Activated CD4-positive, alpha-beta T cell treated with anti-CD3 and anti-CD28 coated beads for 36 hours (primary cell): ENCODE measurements at regions of chr1 and their contacts with region 1.

Region 1: GRCh38 chr1:65687428-65688214 is 105.1 kb upstream of the PDE4B start:
- DNase-seq: peak; percentile 88
- ATAC-seq: peak; percentile 88
- H3K4me3 Mint-ChIP-seq: no peak overlapping the region
- H3K27ac Mint-ChIP-seq: no peak overlapping the region
- H3K4me1 Mint-ChIP-seq: peaks cover 2% of the 10 kb centered on the region
- H3K27me3 Mint-ChIP-seq: peaks cover 10% of the 10 kb centered on the region

Region 2: GRCh38 chr1:64268653-64269557 is 1418.7 kb before region 1 on chr1:
- CTCF ChIA-PET with region 1: no interaction called
- POLR2A ChIA-PET with region 1: no interaction called
- intact Hi-C with region 1: loop called in 1 of 2 experiments (anchors 2 kb)
- DNase-seq: peak; percentile 83
- ATAC-seq: peak; percentile 70
- H3K4me3 Mint-ChIP-seq: no peak overlapping the region
- H3K27ac Mint-ChIP-seq: no peak overlapping the region
- H3K4me1 Mint-ChIP-seq: no peaks in the 10 kb centered on the region
- H3K27me3 Mint-ChIP-seq: peaks cover 7% of the 10 kb centered on the region

Region 3: GRCh38 chr1:64823691-64824476 is 863.7 kb before region 1 on chr1:
- CTCF ChIA-PET with region 1: no interaction called
- POLR2A ChIA-PET with region 1: no interaction called
- intact Hi-C with region 1: loop called in 1 of 2 experiments (anchors 5 kb)
- DNase-seq: peak; percentile 74
- ATAC-seq: no peak
- H3K4me3 Mint-ChIP-seq: no peak overlapping the region
- H3K27ac Mint-ChIP-seq: peak overlapping the region; percentile 27
- H3K4me1 Mint-ChIP-seq: peaks cover 31% of the 10 kb centered on the region
- H3K27me3 Mint-ChIP-seq: no peaks in the 10 kb centered on the region

Region 4: DNA sequence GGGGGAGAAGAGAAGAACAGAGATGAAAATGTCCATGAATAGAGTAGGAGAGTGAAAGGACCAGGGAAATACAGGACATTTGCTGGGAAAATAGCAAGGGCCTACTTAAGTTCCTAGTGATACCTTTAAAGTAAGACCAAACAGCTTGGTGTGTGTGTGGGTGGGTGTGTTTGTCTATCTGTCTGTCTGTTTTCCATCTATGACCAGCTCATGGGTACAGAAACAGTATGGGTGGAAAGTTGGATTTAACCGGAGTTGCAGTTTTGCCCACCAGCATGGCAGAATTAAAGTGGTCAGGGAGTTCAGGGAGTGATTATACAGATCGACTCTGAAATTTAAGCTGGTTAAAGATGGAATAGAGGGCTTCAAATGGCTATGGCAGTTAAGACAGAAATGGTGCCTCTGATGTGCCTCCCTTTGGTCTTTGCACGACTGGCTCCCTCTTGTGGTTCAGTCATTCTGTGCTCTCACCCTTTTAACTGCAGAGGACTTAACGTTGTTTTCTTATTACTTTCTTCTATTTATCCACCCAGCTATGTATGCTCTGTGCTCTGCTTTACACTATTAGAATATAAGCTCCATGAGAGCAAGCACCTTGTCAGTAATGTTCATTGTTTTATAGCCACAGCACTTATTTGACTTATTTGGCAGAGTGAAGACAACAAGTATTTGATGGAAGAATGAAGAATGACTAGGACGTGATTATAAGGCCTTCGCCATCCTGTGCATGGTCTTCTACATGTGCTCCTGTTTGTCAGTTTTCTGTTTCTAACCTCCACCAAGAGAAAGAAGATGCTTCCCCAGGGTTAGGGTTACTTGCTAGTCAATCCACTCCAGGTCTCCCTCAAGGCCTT is 612.3 kb before region 1 on chr1:
- CTCF ChIA-PET with region 1: interaction called, 16 read pairs
- POLR2A ChIA-PET with region 1: no interaction called
- intact Hi-C with region 1: no loop called
- DNase-seq: peak; percentile 77
- ATAC-seq: peak; percentile 92
- H3K4me3 Mint-ChIP-seq: no peak overlapping the region
- H3K27ac Mint-ChIP-seq: no peak overlapping the region
- H3K4me1 Mint-ChIP-seq: peaks cover 20% of the 10 kb centered on the region
- H3K27me3 Mint-ChIP-seq: peaks cover 3% of the 10 kb centered on the region

Region 5: DNA sequence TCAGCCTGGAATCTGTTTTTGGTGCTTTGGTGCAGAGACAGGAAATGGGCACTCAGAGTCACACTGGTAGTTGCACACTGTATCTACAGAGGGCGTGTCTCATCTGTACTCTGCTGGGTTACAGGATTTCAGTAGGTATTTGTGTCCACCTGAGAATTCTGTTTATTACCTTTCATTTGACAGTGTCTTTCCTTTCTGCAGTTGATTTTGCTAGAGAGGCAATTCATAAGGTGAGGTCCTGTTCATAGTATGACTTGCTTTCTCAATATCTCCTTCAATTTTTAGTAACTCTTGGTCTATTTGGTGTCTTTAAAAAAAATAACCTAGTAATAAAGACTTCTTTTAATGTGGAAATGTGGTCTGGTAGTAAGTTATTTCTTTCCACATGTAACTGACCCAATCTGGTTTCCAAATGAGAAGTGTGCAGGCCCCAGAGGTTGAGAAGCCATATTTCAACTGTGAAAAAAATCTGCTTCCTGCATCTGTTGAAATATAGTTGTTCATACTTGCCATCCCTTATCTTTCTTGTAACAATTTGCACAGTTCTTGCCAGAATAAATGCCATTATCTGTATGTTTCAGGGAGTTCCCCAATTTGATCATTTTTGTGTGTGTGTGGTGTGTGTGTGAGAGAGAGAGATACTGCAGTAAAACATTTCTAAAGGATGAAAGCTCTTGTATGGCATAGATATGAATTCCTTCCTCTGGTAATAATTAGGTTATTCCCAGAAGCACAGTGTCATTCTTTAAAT is 456.7 kb before region 1 on chr1:
- CTCF ChIA-PET with region 1: interaction called, 41 read pairs
- POLR2A ChIA-PET with region 1: no interaction called
- intact Hi-C with region 1: loop called (anchors 1 kb)
- DNase-seq: no peak
- ATAC-seq: peak; percentile 84
- H3K4me3 Mint-ChIP-seq: no peak overlapping the region
- H3K27ac Mint-ChIP-seq: no peak overlapping the region
- H3K4me1 Mint-ChIP-seq: peaks cover 23% of the 10 kb centered on the region
- H3K27me3 Mint-ChIP-seq: peaks cover 5% of the 10 kb centered on the region

Region 6: GRCh38 chr1:65431111-65431705 is 256.4 kb before region 1 on chr1:
- CTCF ChIA-PET with region 1: interaction called, 5 read pairs
- POLR2A ChIA-PET with region 1: no interaction called
- intact Hi-C with region 1: loop called (anchors 1 to 5 kb)
- DNase-seq: no peak
- ATAC-seq: no peak
- H3K4me3 Mint-ChIP-seq: no peak overlapping the region
- H3K27ac Mint-ChIP-seq: no peak overlapping the region
- H3K4me1 Mint-ChIP-seq: peaks cover 10% of the 10 kb centered on the region
- H3K27me3 Mint-ChIP-seq: no peaks in the 10 kb centered on the region

Region 7: DNA sequence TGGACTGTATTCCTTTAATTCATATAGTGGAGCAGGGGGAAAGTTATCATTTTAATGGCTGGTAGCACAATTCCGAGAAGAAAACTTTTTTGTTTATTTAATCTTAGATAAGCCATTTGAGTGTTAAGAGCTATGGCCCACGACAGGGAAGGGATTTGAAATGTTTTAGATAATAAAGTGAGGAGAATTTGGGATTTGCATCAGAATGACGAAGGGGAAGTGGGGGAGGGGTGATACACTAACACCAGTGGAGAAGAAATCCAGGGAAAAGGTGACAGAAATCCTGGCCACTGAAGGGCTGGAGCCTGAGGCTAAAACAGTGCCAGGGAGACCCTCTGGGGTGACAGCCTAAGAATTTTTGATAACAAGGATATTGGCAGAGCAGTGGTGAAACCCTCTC is 246.2 kb before region 1 on chr1:
- CTCF ChIA-PET with region 1: no interaction called
- POLR2A ChIA-PET with region 1: no interaction called
- intact Hi-C with region 1: no loop called
- DNase-seq: no peak
- ATAC-seq: no peak
- H3K4me3 Mint-ChIP-seq: no peak overlapping the region
- H3K27ac Mint-ChIP-seq: no peak overlapping the region
- H3K4me1 Mint-ChIP-seq: no peaks in the 10 kb centered on the region
- H3K27me3 Mint-ChIP-seq: no peaks in the 10 kb centered on the region

Region 8: DNA sequence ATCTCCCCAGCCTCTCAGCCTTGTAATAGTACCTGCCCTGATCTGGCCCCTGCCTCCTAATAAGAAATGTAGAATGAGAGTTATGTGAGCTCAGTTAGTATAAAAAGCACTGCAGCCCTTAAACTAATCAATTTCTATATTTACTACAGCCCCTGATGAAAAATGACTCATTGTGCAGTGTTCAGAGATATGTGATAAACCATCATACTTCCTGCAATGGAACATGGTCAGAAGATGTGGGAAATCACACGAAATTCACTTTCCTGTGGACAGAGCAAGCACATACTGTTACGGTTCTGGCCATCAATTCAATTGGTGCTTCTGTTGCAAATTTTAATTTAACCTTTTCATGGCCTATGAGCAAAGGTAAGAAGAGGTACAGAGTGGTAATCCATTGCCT is 71.8 kb before region 1 on chr1:
- CTCF ChIA-PET with region 1: no interaction called
- POLR2A ChIA-PET with region 1: no interaction called
- intact Hi-C with region 1: no loop called
- DNase-seq: no peak
- ATAC-seq: no peak
- H3K4me3 Mint-ChIP-seq: no peak overlapping the region
- H3K27ac Mint-ChIP-seq: no peak overlapping the region
- H3K4me1 Mint-ChIP-seq: peaks cover 7% of the 10 kb centered on the region
- H3K27me3 Mint-ChIP-seq: no peaks in the 10 kb centered on the region

Region 9: GRCh38 chr1:65650682-65651081 is 36.9 kb before region 1 on chr1:
- CTCF ChIA-PET with region 1: no interaction called
- POLR2A ChIA-PET with region 1: no interaction called
- intact Hi-C with region 1: no loop called
- DNase-seq: no peak
- ATAC-seq: no peak
- H3K4me3 Mint-ChIP-seq: no peak overlapping the region
- H3K27ac Mint-ChIP-seq: no peak overlapping the region
- H3K4me1 Mint-ChIP-seq: no peaks in the 10 kb centered on the region
- H3K27me3 Mint-ChIP-seq: peaks cover 8% of the 10 kb centered on the region

Region 10: DNA sequence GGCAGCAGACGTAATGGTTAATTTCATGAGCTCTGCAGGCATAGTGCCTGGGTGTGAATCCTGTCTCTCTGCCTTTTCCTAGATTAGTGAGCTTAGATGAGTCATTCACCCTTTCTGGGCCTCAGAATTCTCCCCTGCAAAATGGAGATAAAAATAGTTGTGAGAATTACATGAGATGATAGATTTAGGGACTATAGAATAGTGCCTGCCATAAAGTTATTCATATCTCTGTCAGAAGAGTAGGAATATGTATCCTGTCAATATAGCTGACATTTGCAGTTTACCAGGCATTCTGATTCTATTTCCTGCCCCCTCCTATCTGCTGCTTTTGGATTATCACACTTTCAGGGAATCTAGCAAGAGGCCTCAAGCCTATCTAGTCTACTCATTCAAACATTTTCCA is 217.1 kb after region 1 on chr1:
- CTCF ChIA-PET with region 1: no interaction called
- POLR2A ChIA-PET with region 1: no interaction called
- intact Hi-C with region 1: no loop called
- DNase-seq: no peak
- ATAC-seq: no peak
- H3K4me3 Mint-ChIP-seq: no peak overlapping the region
- H3K27ac Mint-ChIP-seq: no peak overlapping the region
- H3K4me1 Mint-ChIP-seq: no peaks in the 10 kb centered on the region
- H3K27me3 Mint-ChIP-seq: peaks cover 19% of the 10 kb centered on the region